ENCODE measurements at regions of chr16 and their contacts with region 1.

Region 1: DNA sequence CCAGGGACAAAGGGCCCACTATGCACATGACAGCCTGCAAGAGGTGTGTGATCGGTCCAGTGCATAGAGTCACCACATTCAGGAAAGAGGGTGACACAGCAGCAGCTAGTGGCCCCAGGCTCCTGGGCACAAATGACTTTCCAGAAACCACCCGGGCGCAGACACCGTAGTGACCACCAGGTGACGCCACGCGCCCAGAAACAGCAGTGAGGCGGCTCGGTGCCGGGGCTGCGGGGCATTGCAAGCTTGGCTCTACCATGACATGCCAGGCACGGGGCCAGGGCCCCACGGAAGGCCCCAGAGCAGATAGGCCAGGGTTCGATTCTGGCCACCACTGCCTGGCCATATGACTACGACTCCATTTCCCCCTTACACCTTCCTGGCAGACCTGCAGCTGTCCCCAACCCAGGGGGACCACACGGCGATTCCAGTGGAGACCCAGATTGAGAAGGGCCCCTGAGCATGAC is 6.7 kb downstream of the RHBDF1 start:
- DNase-seq: no peak
- ATAC-seq: peak; percentile 96
- H3K4me3 ChIP-seq: no peak overlapping the region
- H3K27ac ChIP-seq: no peak overlapping the region
- H3K4me1 ChIP-seq: no peaks in the 10 kb centered on the region
- H3K27me3 ChIP-seq: peaks cover 0 to under 1% of the 10 kb centered on the region in 2 experiments; a peak in 3 of 4 replicates
- CTCF ChIP-seq: peak; percentile 97 to 99 (median 99); a peak in 5 of 6 replicates
- EP300 ChIP-seq: no peak
- POLR2A ChIP-seq: no peak
- RAD21 ChIP-seq: peak; percentile 95

Region 2: GRCh38 chr16:53346-54236 is 12.1 kb before region 1 on chr16 and contains the starts of genes POLR3K and SNRNP25:
- CTCF ChIA-PET with region 1: interaction called, 13 read pairs
- POLR2A ChIA-PET with region 1: interaction called, 5 read pairs
- RAD21 ChIA-PET with region 1: interaction called, 6 read pairs
- SMC1A ChIA-PET with region 1: interaction called, 10 read pairs
- in situ Hi-C with region 1: no loop called
- intact Hi-C with region 1: no loop called
- DNase-seq: peak; percentile 84
- ATAC-seq: peak; percentile 98
- H3K4me3 ChIP-seq: peak within 1 kb of the TSS; percentile 93
- H3K27ac ChIP-seq: peak within 1 kb of the TSS; percentile 87
- H3K4me1 ChIP-seq: no peaks in the 10 kb centered on the region
- H3K27me3 ChIP-seq: no peaks in the 10 kb centered on the region
- CTCF ChIP-seq: no peak
- EP300 ChIP-seq: no peak
- POLR2A ChIP-seq: peak; percentile 95
- RAD21 ChIP-seq: no peak
- polyA plus RNA-seq, gene POLR3K: 195 to 222 TPM
- polyA plus RNA-seq, gene SNRNP25: 40.9 to 59.8 TPM

Region 3: GRCh38 chr16:84718-85406 is 19.2 kb after region 1 on chr16:
- CTCF ChIA-PET with region 1: interaction called, 36 read pairs
- POLR2A ChIA-PET with region 1: interaction called, 5 read pairs
- RAD21 ChIA-PET with region 1: interaction called, 6 read pairs
- SMC1A ChIA-PET with region 1: interaction called, 9 read pairs
- in situ Hi-C with region 1: no loop called
- intact Hi-C with region 1: no loop called
- DNase-seq: peak; percentile 65
- ATAC-seq: peak; percentile 90
- H3K4me3 ChIP-seq: no peak overlapping the region
- H3K27ac ChIP-seq: peak overlapping the region; percentile 54
- H3K4me1 ChIP-seq: peaks cover 17% of the 10 kb centered on the region
- H3K27me3 ChIP-seq: no peaks in the 10 kb centered on the region
- CTCF ChIP-seq: no peak
- EP300 ChIP-seq: peak in 1 of 2 experiments; percentile 48; a peak in 1 of 4 replicates
- POLR2A ChIP-seq: peak; percentile 65
- RAD21 ChIP-seq: no peak

Region 4: GRCh38 chr16:106623-107324 is 41.1 kb after region 1 on chr16:
- CTCF ChIA-PET with region 1: interaction called, 52 read pairs
- POLR2A ChIA-PET with region 1: interaction called, 3 read pairs
- RAD21 ChIA-PET with region 1: interaction called, 9 read pairs
- SMC1A ChIA-PET with region 1: interaction called, 14 read pairs
- in situ Hi-C with region 1: no loop called
- intact Hi-C with region 1: no loop called
- DNase-seq: no peak
- ATAC-seq: peak; percentile 94
- H3K4me3 ChIP-seq: no peak overlapping the region
- H3K27ac ChIP-seq: no peak overlapping the region
- H3K4me1 ChIP-seq: no peaks in the 10 kb centered on the region
- H3K27me3 ChIP-seq: no peaks in the 10 kb centered on the region
- CTCF ChIP-seq: peak; percentile 69 to 84 (median 83)
- EP300 ChIP-seq: no peak
- POLR2A ChIP-seq: no peak
- RAD21 ChIP-seq: peak; percentile 81

Measured in GM12878 (cell line).